ENCODE measurements at regions of chr22 and their contacts with region 1.

Region 1: DNA sequence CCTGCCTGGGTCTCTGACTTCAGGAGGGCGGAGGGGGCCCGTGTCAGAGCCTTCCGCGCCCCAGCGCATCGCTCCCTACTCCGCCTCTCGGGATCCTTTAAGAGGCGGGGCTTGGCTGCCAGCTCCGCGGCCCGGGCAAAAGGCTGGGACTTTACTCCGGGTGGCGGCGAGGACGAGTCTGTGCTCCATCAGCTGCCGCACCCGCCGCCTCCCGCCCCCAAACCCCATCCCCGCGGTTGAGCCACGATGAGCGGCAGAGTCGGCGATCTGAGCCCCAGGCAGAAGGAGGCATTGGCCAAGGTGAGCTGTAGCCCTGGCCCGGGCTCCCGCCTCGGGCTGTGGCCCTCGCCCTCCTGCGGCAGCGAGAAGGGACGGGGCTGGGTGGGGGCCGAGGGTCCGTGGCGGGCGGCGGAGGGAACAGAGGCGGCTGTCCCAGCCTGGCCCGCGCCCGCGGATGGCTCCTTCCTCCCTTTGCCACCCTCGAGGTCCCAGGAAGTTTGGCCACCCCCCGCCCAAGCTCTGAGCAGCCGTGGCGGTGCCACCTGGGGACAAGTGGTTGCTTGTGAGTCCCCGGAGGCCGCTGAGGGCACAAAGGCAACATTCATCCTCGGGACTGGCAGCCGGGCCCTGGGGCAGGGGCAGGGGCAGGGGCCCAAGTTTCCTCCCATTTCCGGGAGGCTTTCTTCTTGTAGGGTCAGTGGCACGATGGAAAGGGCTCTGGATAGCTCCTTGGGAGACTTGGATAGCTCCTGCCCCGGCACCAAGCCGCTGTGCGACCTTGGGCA is at the start of gene SEC14L2:
- DNase-seq: peak; percentile 52
- H3K4me3 ChIP-seq: peak within 1 kb of the TSS; percentile 61 to 86 (median 79)
- H3K27ac ChIP-seq: no peak within 1 kb of the TSS
- H3K4me1 ChIP-seq: peaks cover 16% of the 10 kb centered on the region
- H3K27me3 ChIP-seq: no peaks in the 10 kb centered on the region
- CTCF ChIP-seq: no peak
- POLR2A ChIP-seq: peak; percentile 66
- total RNA-seq, gene SEC14L2: 22.7 and 28.8 TPM in 2 replicates

Region 2: GRCh38 chr22:30005213-30005857 is 391.7 kb before region 1 on chr22:
- CTCF ChIA-PET with region 1: no interaction called
- POLR2A ChIA-PET with region 1: no interaction called
- dilution Hi-C with region 1: no loop called
- intact Hi-C with region 1: no loop called
- DNase-seq: peak; percentile 77
- H3K4me3 ChIP-seq: no peak overlapping the region
- H3K27ac ChIP-seq: no peak overlapping the region
- H3K4me1 ChIP-seq: peaks cover 4% of the 10 kb centered on the region
- H3K27me3 ChIP-seq: no peaks in the 10 kb centered on the region
- CTCF ChIP-seq: peak; percentile 85 to 98
- POLR2A ChIP-seq: no peak

Region 3: DNA sequence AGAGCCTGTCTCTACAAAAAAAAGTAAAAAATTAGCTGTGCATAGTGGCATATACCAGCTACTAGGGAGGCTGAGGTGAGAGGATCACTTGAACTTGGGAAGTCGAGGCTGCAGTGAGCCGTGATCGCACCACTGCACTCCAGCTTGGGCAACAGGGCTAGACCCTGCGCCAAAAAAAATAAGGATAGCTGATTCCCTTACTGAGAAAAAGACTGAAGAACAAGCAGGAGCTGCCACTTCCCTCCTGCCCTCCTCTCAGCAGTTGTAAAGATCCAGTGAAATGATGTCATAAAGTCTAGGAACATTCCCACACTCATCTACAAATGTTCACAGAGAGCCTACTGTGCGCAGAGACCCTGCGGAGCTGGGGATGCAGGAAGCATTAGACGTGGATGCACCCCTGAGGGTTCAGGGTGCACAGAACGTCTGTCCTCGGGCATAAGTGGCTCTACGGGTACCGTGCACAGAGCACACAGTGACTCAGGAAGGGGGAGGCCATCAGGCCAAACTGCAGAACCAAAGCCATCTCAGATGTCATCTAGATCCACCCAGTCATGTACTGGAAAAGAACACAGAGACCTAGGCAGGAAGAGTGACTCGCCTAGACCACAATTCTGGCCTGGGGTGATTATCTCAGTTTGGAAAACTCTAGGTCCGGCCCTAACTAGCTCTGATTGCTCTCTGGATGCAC is 11.5 kb after region 1 on chr22:
- CTCF ChIA-PET with region 1: interaction called, 21 read pairs
- POLR2A ChIA-PET with region 1: interaction called, 7 read pairs
- dilution Hi-C with region 1: no loop called
- intact Hi-C with region 1: no loop called
- DNase-seq: peak; percentile 50
- H3K4me3 ChIP-seq: no peak overlapping the region
- H3K27ac ChIP-seq: peak overlapping the region; percentile 6
- H3K4me1 ChIP-seq: peaks cover 6% of the 10 kb centered on the region
- H3K27me3 ChIP-seq: no peaks in the 10 kb centered on the region
- CTCF ChIP-seq: no peak
- POLR2A ChIP-seq: no peak

Region 4: GRCh38 chr22:30413745-30414524 is 16.9 kb after region 1 on chr22:
- CTCF ChIA-PET with region 1: interaction called, 21 read pairs
- POLR2A ChIA-PET with region 1: interaction called, 7 read pairs
- dilution Hi-C with region 1: no loop called
- intact Hi-C with region 1: no loop called
- DNase-seq: no peak
- H3K4me3 ChIP-seq: no peak overlapping the region
- H3K27ac ChIP-seq: no peak overlapping the region
- H3K4me1 ChIP-seq: peaks cover 1% of the 10 kb centered on the region
- H3K27me3 ChIP-seq: no peaks in the 10 kb centered on the region
- CTCF ChIP-seq: no peak
- POLR2A ChIP-seq: no peak

Region 5: GRCh38 chr22:30459181-30460052 is 62.4 kb after region 1 on chr22:
- CTCF ChIA-PET with region 1: no interaction called
- POLR2A ChIA-PET with region 1: no interaction called
- dilution Hi-C with region 1: no loop called
- intact Hi-C with region 1: no loop called
- DNase-seq: no peak
- H3K4me3 ChIP-seq: no peak overlapping the region
- H3K27ac ChIP-seq: no peak overlapping the region
- H3K4me1 ChIP-seq: no peaks in the 10 kb centered on the region
- H3K27me3 ChIP-seq: peaks cover 0 to 3% of the 10 kb centered on the region in 2 experiments
- CTCF ChIP-seq: no peak
- POLR2A ChIP-seq: no peak